Activated CD8-positive, alpha-beta T cell treated with anti-CD3 and anti-CD28 coated beads, Interleukin-2, amount 10 ng/mL, durations not matched to agents 7 days and 5 days (primary cell): ENCODE measurements at regions of chr4 and their contacts with region 1.

Region 1: GRCh38 chr4:165493359-165493758 is 114.6 kb downstream of the CPE start:
- DNase-seq: peak; percentile 75
- ATAC-seq: peak; percentile 99
- H3K4me3 Mint-ChIP-seq: no peak overlapping the region
- H3K27ac Mint-ChIP-seq: no peak overlapping the region
- H3K4me1 Mint-ChIP-seq: peaks cover 5% of the 10 kb centered on the region
- H3K27me3 Mint-ChIP-seq: peaks cover 16% of the 10 kb centered on the region

Region 2: GRCh38 chr4:165481053-165481835 is 12.1 kb before region 1 on chr4:
- CTCF ChIA-PET with region 1: interaction called, 17 read pairs
- POLR2A ChIA-PET with region 1: no interaction called
- DNase-seq: no peak
- ATAC-seq: no peak
- H3K4me3 Mint-ChIP-seq: no peak overlapping the region
- H3K27ac Mint-ChIP-seq: no peak overlapping the region
- H3K4me1 Mint-ChIP-seq: no peaks in the 10 kb centered on the region
- H3K27me3 Mint-ChIP-seq: peaks cover 14% of the 10 kb centered on the region

Region 3: GRCh38 chr4:165537028-165537648 is 43.8 kb after region 1 on chr4:
- CTCF ChIA-PET with region 1: interaction called, 10 read pairs
- POLR2A ChIA-PET with region 1: no interaction called
- DNase-seq: no peak
- ATAC-seq: peak; percentile 27
- H3K4me3 Mint-ChIP-seq: no peak overlapping the region
- H3K27ac Mint-ChIP-seq: no peak overlapping the region
- H3K4me1 Mint-ChIP-seq: no peaks in the 10 kb centered on the region
- H3K27me3 Mint-ChIP-seq: peaks cover 4% of the 10 kb centered on the region

Region 4: GRCh38 chr4:166091912-166092510 is 598.7 kb after region 1 on chr4:
- CTCF ChIA-PET with region 1: interaction called, 11 read pairs
- POLR2A ChIA-PET with region 1: no interaction called
- DNase-seq: no peak
- ATAC-seq: no peak
- H3K4me3 Mint-ChIP-seq: no peak overlapping the region
- H3K27ac Mint-ChIP-seq: no peak overlapping the region
- H3K4me1 Mint-ChIP-seq: no peaks in the 10 kb centered on the region
- H3K27me3 Mint-ChIP-seq: no peaks in the 10 kb centered on the region